Activated CD4-positive, alpha-beta memory T cell treated with anti-CD3 and anti-CD28 coated beads for 36 hours (primary cell): ENCODE measurements at regions of chr2 and their contacts with region 1.

Region 1: GRCh38 chr2:38740851-38741731 is 10.1 kb downstream of the SRSF7 start:
- DNase-seq: peak; percentile 51
- H3K4me3 Mint-ChIP-seq: no peak overlapping the region
- H3K27ac Mint-ChIP-seq: peak overlapping the region; percentile 61
- H3K4me1 Mint-ChIP-seq: peaks cover 66% of the 10 kb centered on the region
- H3K27me3 Mint-ChIP-seq: no peaks in the 10 kb centered on the region

Region 2: GRCh38 chr2:38377050-38377828 is 363.9 kb before region 1 on chr2 and contains the start of gene ATL2:
- CTCF ChIA-PET with region 1: interaction called, 3 read pairs
- POLR2A ChIA-PET with region 1: no interaction called
- intact Hi-C with region 1: loop called (anchors 5 kb)
- DNase-seq: peak; percentile 97
- H3K4me3 Mint-ChIP-seq: peak within 1 kb of the TSS; percentile 83
- H3K27ac Mint-ChIP-seq: peak within 1 kb of the TSS; percentile 81
- H3K4me1 Mint-ChIP-seq: peaks cover 55% of the 10 kb centered on the region
- H3K27me3 Mint-ChIP-seq: no peaks in the 10 kb centered on the region
- total RNA-seq, gene ATL2: 51.3 to 53.9 TPM

Region 3: DNA sequence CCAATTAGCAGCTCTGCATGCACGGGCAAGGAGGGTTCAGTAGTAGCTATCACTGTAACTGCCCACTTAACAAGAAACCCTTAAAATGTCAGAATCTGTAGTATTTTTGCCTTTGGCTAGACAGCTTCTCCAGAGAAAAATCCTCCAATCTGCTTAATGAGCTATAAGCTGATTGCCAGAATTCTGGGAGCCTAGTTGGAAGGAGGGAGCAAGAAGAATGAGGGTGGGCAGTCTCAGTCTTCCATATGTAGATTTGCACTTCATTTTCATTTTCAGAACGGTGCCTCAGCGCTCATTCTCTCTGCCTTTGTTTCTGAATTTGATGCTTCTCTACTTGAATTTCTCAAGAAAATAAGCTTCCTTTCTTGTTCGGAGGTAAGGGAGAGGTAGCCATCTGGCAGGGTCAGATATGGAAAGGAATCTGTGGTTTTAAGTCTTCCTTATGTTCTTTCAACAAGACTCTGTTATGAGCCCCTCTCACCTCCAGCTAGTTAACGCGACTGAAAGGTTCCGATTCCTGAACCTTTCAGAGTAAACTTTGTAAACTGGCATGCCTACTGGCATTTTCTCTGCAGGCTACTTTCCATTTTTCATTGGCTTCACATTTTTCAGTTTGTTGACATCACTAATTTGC is 191.9 kb before region 1 on chr2:
- CTCF ChIA-PET with region 1: interaction called, 20 read pairs
- POLR2A ChIA-PET with region 1: interaction called, 3 read pairs
- intact Hi-C with region 1: no loop called
- DNase-seq: no peak
- H3K4me3 Mint-ChIP-seq: no peak overlapping the region
- H3K27ac Mint-ChIP-seq: no peak overlapping the region
- H3K4me1 Mint-ChIP-seq: peaks cover 23% of the 10 kb centered on the region
- H3K27me3 Mint-ChIP-seq: no peaks in the 10 kb centered on the region

Region 4: DNA sequence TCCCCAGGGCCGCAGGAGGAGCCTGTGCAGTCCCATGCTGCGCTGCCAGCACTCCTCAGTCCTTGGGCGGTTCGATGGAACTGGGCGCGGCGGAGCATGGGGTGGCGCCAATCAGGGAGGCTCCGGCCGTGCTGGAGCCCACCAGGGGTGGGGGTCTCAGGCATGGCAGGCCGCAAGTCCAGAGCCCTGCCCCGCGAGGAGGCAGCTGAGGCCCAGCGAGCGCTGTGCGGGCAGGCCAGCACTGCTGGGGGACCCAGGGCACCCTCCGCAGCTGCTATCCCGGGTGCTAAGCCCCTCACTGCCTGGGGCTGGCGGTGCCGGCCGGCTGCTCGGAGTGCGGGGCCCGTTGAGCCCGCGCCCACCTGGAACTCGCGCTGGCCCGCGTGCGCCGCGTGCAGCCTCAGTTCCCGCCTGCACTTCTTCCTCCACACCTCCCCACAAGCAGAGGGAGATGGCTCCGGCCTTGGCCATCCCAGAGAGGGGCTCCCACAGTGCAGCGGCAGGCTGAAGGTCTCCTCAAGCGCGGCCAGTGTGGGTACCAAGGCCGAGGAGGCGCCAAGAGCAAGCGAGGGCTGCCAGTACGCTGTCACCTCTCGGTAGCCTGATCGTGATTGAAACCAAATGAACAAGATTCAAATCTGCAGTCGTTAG is 97.9 kb before region 1 on chr2:
- CTCF ChIA-PET with region 1: no interaction called
- POLR2A ChIA-PET with region 1: no interaction called
- intact Hi-C with region 1: no loop called
- DNase-seq: no peak
- H3K4me3 Mint-ChIP-seq: peak overlapping the region; percentile 52
- H3K27ac Mint-ChIP-seq: peak overlapping the region; percentile 88
- H3K4me1 Mint-ChIP-seq: peaks cover 46% of the 10 kb centered on the region
- H3K27me3 Mint-ChIP-seq: no peaks in the 10 kb centered on the region

Region 5: GRCh38 chr2:38720613-38721241 is 20.4 kb before region 1 on chr2:
- CTCF ChIA-PET with region 1: interaction called, 5 read pairs
- POLR2A ChIA-PET with region 1: interaction called, 10 read pairs
- intact Hi-C with region 1: no loop called
- DNase-seq: peak; percentile 47
- H3K4me3 Mint-ChIP-seq: peak overlapping the region; percentile 25
- H3K27ac Mint-ChIP-seq: peak overlapping the region; percentile 84
- H3K4me1 Mint-ChIP-seq: peaks cover 72% of the 10 kb centered on the region
- H3K27me3 Mint-ChIP-seq: no peaks in the 10 kb centered on the region

Region 6: GRCh38 chr2:39227628-39228412 is 486.7 kb after region 1 on chr2:
- CTCF ChIA-PET with region 1: no interaction called
- POLR2A ChIA-PET with region 1: no interaction called
- intact Hi-C with region 1: loop called (anchors 5 kb)
- DNase-seq: peak; percentile 87
- H3K4me3 Mint-ChIP-seq: peak overlapping the region; percentile 56
- H3K27ac Mint-ChIP-seq: peak overlapping the region; percentile 59
- H3K4me1 Mint-ChIP-seq: peaks cover 36% of the 10 kb centered on the region
- H3K27me3 Mint-ChIP-seq: no peaks in the 10 kb centered on the region